ENCODE measurements at regions of chr14 and their contacts with region 1.

Region 1: GRCh38 chr14:55430024-55430690 is 10.3 kb downstream of the TBPL2 start:
- DNase-seq: peak; percentile 66
- ATAC-seq: peak; percentile 77
- H3K4me3 ChIP-seq: no peak overlapping the region
- H3K27ac ChIP-seq: no peak overlapping the region
- H3K4me1 ChIP-seq: peaks cover 7 to 21% of the 10 kb centered on the region in 2 experiments
- H3K27me3 ChIP-seq: no peaks in the 10 kb centered on the region
- CTCF ChIP-seq: peak; percentile 49 to 63 (median 57); a peak in 4 of 6 replicates
- POLR2A ChIP-seq: no peak
- RAD21 ChIP-seq: peak; percentile 77

Region 2: GRCh38 chr14:55071870-55072640 is 358.1 kb before region 1 on chr14:
- CTCF ChIA-PET with region 1: no interaction called
- POLR2A ChIA-PET with region 1: no interaction called
- RAD21 ChIA-PET with region 1: no interaction called
- intact Hi-C with region 1: no loop called
- DNase-seq: no peak
- ATAC-seq: no peak
- H3K4me3 ChIP-seq: no peak overlapping the region
- H3K27ac ChIP-seq: no peak overlapping the region
- H3K4me1 ChIP-seq: peaks cover 9 to 41% of the 10 kb centered on the region in 2 experiments; a peak in 3 of 4 replicates
- H3K27me3 ChIP-seq: no peaks in the 10 kb centered on the region
- CTCF ChIP-seq: no peak
- POLR2A ChIP-seq: no peak
- RAD21 ChIP-seq: no peak

Region 3: GRCh38 chr14:55180434-55180833 is 249.7 kb before region 1 on chr14:
- CTCF ChIA-PET with region 1: no interaction called
- POLR2A ChIA-PET with region 1: no interaction called
- RAD21 ChIA-PET with region 1: no interaction called
- intact Hi-C with region 1: no loop called
- DNase-seq: no peak
- ATAC-seq: no peak
- H3K4me3 ChIP-seq: no peak overlapping the region
- H3K27ac ChIP-seq: no peak overlapping the region
- H3K4me1 ChIP-seq: no peaks in the 10 kb centered on the region
- H3K27me3 ChIP-seq: no peaks in the 10 kb centered on the region
- CTCF ChIP-seq: no peak
- POLR2A ChIP-seq: no peak
- RAD21 ChIP-seq: no peak

Region 4: DNA sequence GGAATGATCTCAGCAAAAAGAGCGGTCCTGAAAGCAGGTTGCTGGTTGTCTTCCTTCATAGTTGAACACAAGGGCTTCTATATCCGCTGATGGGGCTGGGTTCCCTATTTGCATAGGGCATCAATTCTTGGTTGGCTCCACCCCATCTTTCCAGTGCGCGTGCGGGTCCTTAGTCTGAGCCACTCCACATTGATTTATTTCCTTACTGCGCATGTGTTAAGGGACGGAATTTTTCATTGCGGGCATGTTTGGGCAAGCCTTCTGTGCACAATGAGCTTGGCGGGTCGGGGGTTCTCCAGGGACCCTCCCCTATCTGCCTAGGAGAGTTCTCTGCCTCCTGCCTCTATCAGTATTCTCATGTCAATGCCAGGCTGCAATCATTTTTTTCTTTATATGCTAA is 217.5 kb before region 1 on chr14:
- CTCF ChIA-PET with region 1: interaction called, 3 read pairs
- POLR2A ChIA-PET with region 1: no interaction called
- RAD21 ChIA-PET with region 1: no interaction called
- intact Hi-C with region 1: loop called (anchors 10 kb)
- DNase-seq: no peak
- ATAC-seq: peak; percentile 30
- H3K4me3 ChIP-seq: no peak overlapping the region
- H3K27ac ChIP-seq: no peak overlapping the region
- H3K4me1 ChIP-seq: peaks cover 0 to 5% of the 10 kb centered on the region in 2 experiments; a peak in 2 of 4 replicates
- H3K27me3 ChIP-seq: no peaks in the 10 kb centered on the region
- CTCF ChIP-seq: no peak
- POLR2A ChIP-seq: no peak
- RAD21 ChIP-seq: no peak

Region 5: DNA sequence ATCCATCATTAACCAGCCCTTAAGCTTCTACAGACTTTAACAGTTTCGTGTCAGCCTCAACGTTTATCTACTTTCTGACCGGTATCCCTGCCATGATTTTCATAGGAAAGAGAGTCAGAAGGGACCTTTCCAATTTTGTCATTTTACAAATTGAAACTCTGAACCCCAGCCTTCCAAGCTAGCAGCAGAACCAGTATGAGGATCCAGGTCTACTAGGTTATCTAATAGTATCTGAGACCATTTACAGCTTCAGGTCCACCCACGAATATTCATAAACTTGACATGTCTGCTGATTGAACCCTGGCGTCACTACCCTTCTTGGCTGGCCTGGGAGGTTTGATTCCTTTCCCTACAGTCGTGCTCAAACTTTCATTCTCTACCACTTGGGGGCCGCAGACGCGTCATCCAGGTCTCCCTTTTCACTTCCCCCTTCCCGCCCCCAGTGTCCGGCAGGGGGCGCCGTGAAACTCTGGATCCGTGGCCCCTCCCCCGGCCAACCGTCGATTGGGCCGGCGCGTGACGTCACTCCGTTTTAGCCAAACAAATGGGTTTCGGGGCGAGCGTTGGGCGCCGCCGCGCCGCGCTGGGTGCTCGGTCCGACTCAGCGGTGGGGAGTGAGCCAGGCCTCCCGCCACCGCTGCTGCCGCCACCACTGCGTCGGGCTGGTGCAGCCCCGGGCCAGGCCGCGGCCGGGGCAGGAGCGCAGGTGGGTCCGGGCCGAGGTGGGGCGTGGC is 159.2 kb before region 1 on chr14 and contains the start of gene FBXO34:
- CTCF ChIA-PET with region 1: interaction called, 4 read pairs
- POLR2A ChIA-PET with region 1: no interaction called
- RAD21 ChIA-PET with region 1: no interaction called
- intact Hi-C with region 1: loop called (anchors 1 kb)
- DNase-seq: peak; percentile 95
- ATAC-seq: peak; percentile 92
- H3K4me3 ChIP-seq: peak within 1 kb of the TSS; percentile 83 to 93
- H3K27ac ChIP-seq: peak within 1 kb of the TSS; percentile 81
- H3K4me1 ChIP-seq: peaks cover 8 to 16% of the 10 kb centered on the region in 2 experiments; a peak in 3 of 4 replicates
- H3K27me3 ChIP-seq: no peaks in the 10 kb centered on the region
- CTCF ChIP-seq: peak; percentile 98 to 99 (median 99)
- POLR2A ChIP-seq: peak; percentile 91
- RAD21 ChIP-seq: peak; percentile 83
- total RNA-seq, gene FBXO34: 26.9 TPM

Region 6: DNA sequence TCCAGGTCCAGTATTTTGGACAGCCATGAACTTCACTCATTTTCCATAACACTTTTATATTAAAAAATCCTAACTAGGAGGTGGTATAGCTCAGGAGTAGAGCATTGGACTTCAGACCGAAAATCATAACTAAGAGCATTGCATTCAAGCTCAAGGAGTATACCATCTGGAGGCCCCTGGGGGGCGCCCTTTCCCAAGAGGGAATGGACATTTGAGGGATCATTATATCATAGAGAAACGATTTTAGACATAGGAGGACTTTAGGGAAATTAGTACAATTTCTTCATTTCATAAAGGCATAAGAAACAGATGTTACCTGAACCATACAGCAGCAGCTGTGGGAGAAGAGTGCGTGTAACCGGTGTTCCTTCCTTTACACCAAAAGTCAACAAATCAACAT is 13.3 kb before region 1 on chr14:
- CTCF ChIA-PET with region 1: interaction called, 17 read pairs
- POLR2A ChIA-PET with region 1: interaction called, 3 read pairs
- RAD21 ChIA-PET with region 1: no interaction called
- intact Hi-C with region 1: no loop called
- DNase-seq: peak; percentile 53
- ATAC-seq: peak; percentile 88
- H3K4me3 ChIP-seq: no peak overlapping the region
- H3K27ac ChIP-seq: no peak overlapping the region
- H3K4me1 ChIP-seq: peaks cover 0 to 9% of the 10 kb centered on the region in 2 experiments; a peak in 2 of 4 replicates
- H3K27me3 ChIP-seq: no peaks in the 10 kb centered on the region
- CTCF ChIP-seq: peak; percentile 51 to 93 (median 88); a peak in 5 of 6 replicates
- POLR2A ChIP-seq: no peak
- RAD21 ChIP-seq: peak; percentile 73